ENCODE measurements at regions of chr6 and their contacts with region 1.

Region 1: GRCh38 chr6:41591859-41592502 is 45.8 kb downstream of the FOXP4 start:
- DNase-seq: no peak
- H3K4me3 ChIP-seq: no peak overlapping the region
- H3K27ac ChIP-seq: no peak overlapping the region
- H3K4me1 ChIP-seq: peaks cover 0 to under 1% (median 0%) of the 10 kb centered on the region in 3 donors
- H3K27me3 ChIP-seq: no peaks in the 10 kb centered on the region
- CTCF ChIP-seq: peak; percentile 88 to 98 (median 94)
- POLR2A ChIP-seq: no peak

Region 2: DNA sequence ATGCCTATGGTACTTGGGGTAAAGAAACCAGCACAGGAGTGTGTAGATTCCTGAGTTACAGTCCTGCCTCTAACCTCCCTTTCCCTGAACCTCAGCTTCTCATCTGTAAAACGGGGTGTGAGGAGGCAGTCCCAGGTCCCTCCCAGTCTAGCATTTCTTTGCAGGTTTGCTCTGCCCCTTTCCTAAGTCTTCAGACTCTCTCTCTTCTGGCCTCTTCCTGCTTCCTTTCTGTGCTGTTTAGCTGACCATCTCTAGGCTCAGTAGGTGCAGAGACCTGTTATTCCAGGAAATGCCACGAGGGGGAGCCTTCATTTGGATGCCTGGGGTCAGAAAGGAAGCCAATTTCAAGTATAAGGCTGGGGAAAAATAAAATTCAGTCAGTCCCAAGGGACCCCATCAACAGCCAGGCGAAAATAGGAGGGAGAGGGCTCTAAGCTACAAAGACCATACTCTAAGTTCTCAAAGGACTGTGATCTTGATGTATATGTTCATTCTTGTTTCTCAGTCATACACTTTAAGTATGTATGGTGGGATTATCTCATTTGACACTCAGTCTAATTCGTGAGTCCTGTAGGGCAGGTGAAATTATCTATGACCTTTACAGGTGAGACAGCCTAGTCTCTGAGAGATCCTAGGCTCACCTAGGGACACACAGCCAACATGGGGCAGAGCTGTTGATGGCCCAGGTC is 167.5 kb before region 1 on chr6:
- intact Hi-C with region 1: loop called (anchors 5 kb)
- DNase-seq: no peak
- H3K4me3 ChIP-seq: no peak overlapping the region
- H3K27ac ChIP-seq: no peak overlapping the region
- H3K4me1 ChIP-seq: peaks cover 14 to 31% (median 18%) of the 10 kb centered on the region in 3 donors
- H3K27me3 ChIP-seq: peaks cover 0 to 71% (median 6%) of the 10 kb centered on the region in 4 donors
- CTCF ChIP-seq: peak; percentile 72 to 88 (median 83)
- POLR2A ChIP-seq: no peak